Activated CD8-positive, alpha-beta T cell treated with anti-CD3 and anti-CD28 coated beads for 36 hours (primary cell): ENCODE measurements at regions of chr1 and their contacts with region 1.

Region 1: GRCh38 chr1:198691063-198691462 is 52.2 kb downstream of the PTPRC start:
- DNase-seq: no peak
- ATAC-seq: peak; percentile 23
- H3K4me3 Mint-ChIP-seq: peak overlapping the region; percentile 4
- H3K27ac Mint-ChIP-seq: peak overlapping the region; percentile 79
- H3K4me1 Mint-ChIP-seq: peaks cover 83% of the 10 kb centered on the region
- H3K27me3 Mint-ChIP-seq: no peaks in the 10 kb centered on the region
- CTCF ChIP-seq: no peak

Region 2: DNA sequence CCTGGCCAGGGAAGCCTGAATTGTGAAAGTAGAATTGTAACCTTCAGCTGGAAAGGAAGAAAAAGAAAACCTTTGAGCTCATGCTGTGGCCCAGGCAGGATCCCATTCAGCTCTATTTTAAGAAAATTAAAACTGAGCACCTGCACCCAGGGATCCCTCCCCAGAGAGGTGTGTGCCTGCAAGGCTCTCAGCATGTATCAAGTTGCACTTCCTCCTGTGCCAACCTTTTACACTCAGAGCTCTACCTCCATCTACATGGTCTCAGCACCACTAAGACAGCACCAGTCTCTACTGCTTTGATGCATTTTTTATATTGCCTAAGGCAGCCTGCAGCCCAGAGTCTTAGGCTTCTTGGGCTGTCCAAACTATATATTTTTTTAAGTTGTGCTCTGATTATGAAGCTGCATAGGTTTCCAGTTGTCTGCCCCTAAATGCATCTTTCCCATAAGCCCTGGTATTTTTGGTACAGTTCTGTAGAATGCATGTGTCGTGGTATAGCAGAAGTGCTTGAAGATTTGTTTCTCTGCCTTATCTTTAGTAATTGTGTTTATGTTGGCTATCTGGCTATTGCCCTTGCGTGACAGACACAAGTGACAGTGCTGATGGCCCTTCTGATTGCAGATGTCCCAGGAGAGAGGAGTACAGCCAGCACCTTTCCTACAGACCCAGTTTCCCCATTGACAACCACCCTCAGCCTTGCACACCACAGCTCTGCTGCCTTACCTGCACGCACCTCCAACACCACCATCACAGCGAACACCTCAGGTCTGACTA is 10.9 kb after region 1 on chr1:
- CTCF ChIA-PET with region 1: interaction called, 11 read pairs
- POLR2A ChIA-PET with region 1: interaction called, 7 read pairs
- intact Hi-C with region 1: no loop called
- DNase-seq: no peak
- ATAC-seq: no peak
- H3K4me3 Mint-ChIP-seq: no peak overlapping the region
- H3K27ac Mint-ChIP-seq: peak overlapping the region; percentile 9
- H3K4me1 Mint-ChIP-seq: peaks cover 78% of the 10 kb centered on the region
- H3K27me3 Mint-ChIP-seq: no peaks in the 10 kb centered on the region
- CTCF ChIP-seq: no peak